Panc1 (cell line): ENCODE measurements at regions of chr1 and their contacts with region 1.

Region 1: DNA sequence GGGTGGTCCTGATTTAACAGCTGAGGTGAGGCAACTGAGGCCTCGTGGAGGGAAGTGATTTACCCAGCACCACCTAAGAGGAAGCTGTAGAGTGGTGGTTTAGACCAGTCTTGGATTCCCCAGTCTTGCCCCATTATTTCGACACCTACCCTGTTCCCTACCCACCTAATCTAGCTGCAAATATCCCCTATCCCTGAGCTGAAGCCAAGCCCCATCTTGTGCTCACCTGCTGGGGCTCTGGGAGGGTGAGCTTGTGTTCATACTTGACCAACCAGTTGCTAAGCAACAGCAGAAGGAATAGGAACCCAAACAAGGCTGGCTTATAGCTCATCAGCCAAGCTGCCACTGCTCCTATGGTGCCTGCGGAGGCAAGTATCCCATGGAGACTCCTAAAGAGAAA is 2.0 kb downstream of the TEX46 start:
- DNase-seq: no peak
- ATAC-seq: no peak; the same call in 1 of the 2 replicates
- H3K4me3 ChIP-seq: no peak overlapping the region
- H3K27ac ChIP-seq: no peak overlapping the region
- H3K4me1 ChIP-seq: no peaks in the 10 kb centered on the region
- H3K27me3 ChIP-seq: no peaks in the 10 kb centered on the region
- CTCF ChIP-seq: no peak

Region 2: DNA sequence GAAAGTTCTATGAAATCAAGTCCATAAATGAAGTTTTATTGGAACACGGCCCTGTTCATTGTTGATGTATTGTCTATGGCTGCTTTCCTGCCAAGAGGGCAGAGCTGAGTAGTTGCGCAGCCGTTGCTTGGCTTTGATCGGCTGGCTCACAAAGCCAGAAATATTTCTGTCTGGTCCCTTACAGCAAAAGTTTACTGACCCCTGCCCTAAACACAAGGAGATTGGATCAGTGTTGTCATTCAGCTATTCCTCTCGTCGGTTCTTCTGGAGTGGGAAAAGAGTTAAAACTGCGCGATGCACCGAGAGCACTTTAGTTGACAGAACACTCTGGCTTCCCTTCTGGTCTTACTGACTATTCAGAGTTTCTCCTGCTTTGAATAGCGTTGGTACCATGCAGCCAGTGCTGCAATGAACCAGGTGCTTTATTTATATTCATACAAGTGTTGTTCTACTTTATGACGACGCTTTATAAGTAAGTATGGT is 561.1 kb before region 1 on chr1:
- CTCF ChIA-PET with region 1: no interaction called
- POLR2A ChIA-PET with region 1: no interaction called
- in situ Hi-C with region 1: no loop called
- intact Hi-C with region 1: no loop called
- DNase-seq: no peak
- ATAC-seq: peak; percentile 45
- H3K4me3 ChIP-seq: peak overlapping the region; percentile 80 to 94
- H3K27ac ChIP-seq: peak overlapping the region; percentile 94
- H3K4me1 ChIP-seq: peaks cover 43% of the 10 kb centered on the region
- H3K27me3 ChIP-seq: no peaks in the 10 kb centered on the region
- CTCF ChIP-seq: no peak

Region 3: DNA sequence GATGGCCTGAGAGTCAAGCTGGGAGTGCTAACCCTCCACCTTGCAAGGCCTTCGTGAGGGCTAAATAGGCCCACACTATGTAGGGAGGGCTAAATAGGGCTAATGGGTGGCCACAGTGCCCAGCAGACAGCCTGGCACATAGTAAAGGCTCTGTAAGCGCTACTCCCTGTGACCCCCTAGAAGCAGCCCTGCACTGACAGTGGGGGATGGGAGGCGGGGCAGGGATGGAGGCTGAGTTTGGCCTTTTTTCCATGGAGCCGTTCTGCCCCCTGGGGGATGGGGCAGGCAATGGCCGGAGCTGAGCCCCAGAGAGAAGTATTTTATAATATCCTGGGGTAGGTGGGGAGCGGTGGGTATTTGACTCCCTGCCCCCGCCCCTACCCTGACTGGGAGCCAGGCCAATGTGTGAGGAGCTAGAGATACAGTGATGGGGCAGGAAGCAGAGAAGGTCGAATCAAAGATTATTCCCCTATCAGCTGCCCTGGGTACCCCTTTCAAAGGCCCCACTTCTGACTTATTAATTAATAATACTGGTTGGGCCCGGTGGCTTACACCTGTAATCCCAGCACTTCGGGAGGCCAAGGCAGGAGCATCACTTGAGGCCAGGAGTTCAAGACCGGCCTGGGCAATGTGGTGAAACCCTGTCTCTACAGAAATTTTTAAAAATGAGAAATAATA is 83.3 kb before region 1 on chr1:
- CTCF ChIA-PET with region 1: no interaction called
- POLR2A ChIA-PET with region 1: no interaction called
- in situ Hi-C with region 1: no loop called
- intact Hi-C with region 1: no loop called
- DNase-seq: no peak
- ATAC-seq: peak; percentile 85
- H3K4me3 ChIP-seq: no peak overlapping the region
- H3K27ac ChIP-seq: no peak overlapping the region
- H3K4me1 ChIP-seq: no peaks in the 10 kb centered on the region
- H3K27me3 ChIP-seq: no peaks in the 10 kb centered on the region
- CTCF ChIP-seq: peak; percentile 92

Region 4: GRCh38 chr1:22995774-22996173 is 17.9 kb before region 1 on chr1:
- CTCF ChIA-PET with region 1: no interaction called
- POLR2A ChIA-PET with region 1: no interaction called
- in situ Hi-C with region 1: no loop called
- intact Hi-C with region 1: no loop called
- DNase-seq: no peak
- ATAC-seq: no peak
- H3K4me3 ChIP-seq: no peak overlapping the region
- H3K27ac ChIP-seq: no peak overlapping the region
- H3K4me1 ChIP-seq: no peaks in the 10 kb centered on the region
- H3K27me3 ChIP-seq: no peaks in the 10 kb centered on the region
- CTCF ChIP-seq: no peak

Region 5: GRCh38 chr1:23057301-23057700 is 43.6 kb after region 1 on chr1:
- CTCF ChIA-PET with region 1: no interaction called
- POLR2A ChIA-PET with region 1: no interaction called
- in situ Hi-C with region 1: no loop called
- intact Hi-C with region 1: no loop called
- DNase-seq: no peak
- ATAC-seq: no peak
- H3K4me3 ChIP-seq: no peak overlapping the region
- H3K27ac ChIP-seq: no peak overlapping the region
- H3K4me1 ChIP-seq: no peaks in the 10 kb centered on the region
- H3K27me3 ChIP-seq: no peaks in the 10 kb centered on the region
- CTCF ChIP-seq: no peak

Region 6: DNA sequence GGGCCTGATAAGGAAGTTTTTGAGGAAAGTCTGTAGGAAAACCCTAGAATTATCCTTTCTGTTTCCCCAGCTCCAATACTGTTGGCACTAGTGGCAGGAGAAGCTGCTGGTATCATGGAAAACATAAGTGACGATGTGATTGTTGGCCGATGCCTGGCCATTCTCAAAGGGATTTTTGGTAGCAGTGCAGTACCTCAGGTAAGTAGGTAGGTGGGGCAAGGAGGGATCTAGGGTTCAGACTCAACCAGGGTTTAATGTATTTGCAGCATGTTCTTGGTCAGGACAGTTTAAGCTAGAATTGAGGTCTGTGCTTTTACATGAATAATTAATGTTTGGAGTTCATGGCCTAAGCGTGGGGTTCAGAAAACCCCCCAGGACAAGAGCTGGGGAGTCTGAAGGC is 67.7 kb after region 1 on chr1:
- CTCF ChIA-PET with region 1: no interaction called
- POLR2A ChIA-PET with region 1: interaction called, 12 read pairs
- in situ Hi-C with region 1: no loop called
- intact Hi-C with region 1: no loop called
- DNase-seq: no peak
- ATAC-seq: 0 out of 2 replicates have a peak, but pooled peaks have one; percentile 47
- H3K4me3 ChIP-seq: no peak overlapping the region
- H3K27ac ChIP-seq: no peak overlapping the region
- H3K4me1 ChIP-seq: no peaks in the 10 kb centered on the region
- H3K27me3 ChIP-seq: no peaks in the 10 kb centered on the region
- CTCF ChIP-seq: peak; percentile 49; the same call in 1 of the 2 replicates